Activated T-helper 1 cell treated with anti-CD3 and anti-CD28 coated beads, Interleukin-12 subunit alpha, Interleukin-12 subunit beta, Interleukin-2, Interleukin-4 antibody, amounts not matched to agents 30 ng/mL and 10 ng/mL and 1 ng/mL, durations not matched to agents 14 hours and 24 hours and 36 hours (primary cell): ENCODE measurements at regions of chr11 and their contacts with region 1.

Region 1: DNA sequence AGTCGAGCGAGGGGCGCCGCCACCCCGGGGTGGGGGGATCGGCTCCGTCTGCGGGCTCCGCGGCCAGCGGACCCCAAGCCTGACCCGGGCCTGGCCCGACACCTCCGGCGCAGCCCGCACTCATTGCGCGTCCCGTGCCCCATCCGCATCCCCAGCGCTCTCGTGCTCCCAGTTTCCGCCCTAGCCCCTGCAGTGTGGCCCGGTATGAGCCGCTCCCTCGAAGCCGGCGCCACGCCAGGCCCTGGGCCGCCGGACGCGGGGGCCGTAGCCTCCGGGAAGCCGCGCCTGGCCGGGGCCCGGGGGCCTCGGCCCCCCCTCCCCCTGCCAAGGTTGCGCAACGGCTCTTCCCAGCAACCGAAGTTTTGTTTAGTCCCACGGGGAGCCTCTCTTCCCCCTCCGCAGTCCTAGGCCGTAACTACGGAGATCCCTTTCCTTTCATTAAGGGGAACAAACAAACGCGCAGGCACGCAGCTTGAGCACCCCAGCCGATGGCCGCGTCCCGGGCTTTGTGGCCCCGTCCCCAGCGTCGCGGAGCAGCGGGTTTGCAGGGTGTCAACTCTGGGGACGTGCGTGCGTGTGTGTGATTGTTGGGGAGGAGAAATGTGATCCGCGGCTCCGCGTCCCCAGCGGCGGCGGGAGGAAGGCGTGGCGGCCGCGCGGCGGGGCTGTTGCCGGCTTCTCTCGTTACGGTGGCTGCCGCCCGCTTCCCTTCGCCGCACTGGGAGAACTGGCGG is 883 bp downstream of the HIPK3 start:
- DNase-seq: peak; percentile 72
- H3K4me3 Mint-ChIP-seq: peak overlapping the region; percentile 99
- H3K27ac Mint-ChIP-seq: peak overlapping the region; percentile 99
- H3K4me1 Mint-ChIP-seq: peaks cover 46% of the 10 kb centered on the region
- H3K27me3 Mint-ChIP-seq: peaks cover 2% of the 10 kb centered on the region

Region 2: DNA sequence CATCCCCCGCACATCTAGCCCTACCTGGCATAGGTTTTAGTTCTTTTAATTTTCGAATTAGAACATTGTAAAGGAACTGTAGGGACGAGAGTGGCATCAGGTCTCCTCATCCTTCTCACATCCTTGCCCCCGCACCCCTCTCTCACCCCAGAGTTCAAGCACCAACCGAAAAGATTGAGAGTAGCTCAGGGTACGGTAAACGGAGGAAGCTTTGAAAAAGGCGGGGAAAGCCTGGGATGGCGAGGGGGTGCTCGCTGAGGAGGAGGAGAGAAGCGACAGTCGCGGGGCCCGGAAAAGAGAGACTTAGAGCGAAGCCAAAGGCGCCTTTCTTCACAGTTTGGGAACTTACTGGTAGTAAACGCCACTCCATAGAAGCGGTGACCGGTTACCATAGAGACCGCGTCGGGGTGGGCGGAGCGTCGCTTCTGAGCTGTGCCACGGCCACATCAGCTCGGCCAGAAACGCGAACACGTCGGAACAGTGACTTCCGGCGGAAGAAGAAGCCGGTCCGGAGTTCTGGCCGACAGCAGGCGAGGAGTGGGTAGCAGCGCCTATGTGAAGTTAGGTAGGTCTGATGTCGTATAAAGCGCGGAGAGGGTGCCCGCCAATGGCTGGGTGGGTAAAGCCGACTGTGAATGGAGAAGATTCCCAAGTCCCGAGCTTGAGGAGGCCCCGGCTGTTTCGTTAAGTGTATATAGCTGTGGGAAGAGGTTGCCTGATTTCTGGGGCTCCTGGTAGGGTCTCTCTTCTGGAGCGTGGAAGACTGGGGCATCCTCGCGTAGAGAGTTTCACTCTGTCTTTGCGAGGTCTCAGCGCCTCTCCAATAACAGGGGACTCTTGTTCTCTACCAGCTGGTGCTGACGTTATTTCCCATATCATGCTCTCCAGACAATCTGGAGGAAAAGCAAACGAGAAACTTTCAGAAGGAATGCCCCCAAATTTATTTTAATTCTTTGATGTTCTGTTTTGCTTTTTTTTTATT is 1888.4 kb before region 1 on chr11 and contains the starts of genes DCDC1 and DNAJC24:
- intact Hi-C with region 1: loop called (anchors 5 kb)
- DNase-seq: peak; percentile 89
- H3K4me3 Mint-ChIP-seq: peak within 1 kb of the TSS; percentile 99
- H3K27ac Mint-ChIP-seq: peak within 1 kb of the TSS; percentile 95
- H3K4me1 Mint-ChIP-seq: peaks cover 25% of the 10 kb centered on the region
- H3K27me3 Mint-ChIP-seq: peaks cover 7% of the 10 kb centered on the region
- total RNA-seq, gene DCDC1: not detected in 2 replicates
- total RNA-seq, gene DNAJC24: 15.8 and 20.6 TPM in 2 replicates

Region 3: GRCh38 chr11:33161120-33162005 is 96.7 kb before region 1 on chr11 and contains the start of gene CSTF3:
- intact Hi-C with region 1: loop called (anchors 1 kb)
- DNase-seq: peak; percentile 91
- H3K4me3 Mint-ChIP-seq: peak within 1 kb of the TSS; percentile 100
- H3K27ac Mint-ChIP-seq: peak within 1 kb of the TSS; percentile 100
- H3K4me1 Mint-ChIP-seq: peaks cover 40% of the 10 kb centered on the region
- H3K27me3 Mint-ChIP-seq: no peaks in the 10 kb centered on the region
- total RNA-seq, gene CSTF3: 34.9 and 36.5 TPM in 2 replicates

Region 4: DNA sequence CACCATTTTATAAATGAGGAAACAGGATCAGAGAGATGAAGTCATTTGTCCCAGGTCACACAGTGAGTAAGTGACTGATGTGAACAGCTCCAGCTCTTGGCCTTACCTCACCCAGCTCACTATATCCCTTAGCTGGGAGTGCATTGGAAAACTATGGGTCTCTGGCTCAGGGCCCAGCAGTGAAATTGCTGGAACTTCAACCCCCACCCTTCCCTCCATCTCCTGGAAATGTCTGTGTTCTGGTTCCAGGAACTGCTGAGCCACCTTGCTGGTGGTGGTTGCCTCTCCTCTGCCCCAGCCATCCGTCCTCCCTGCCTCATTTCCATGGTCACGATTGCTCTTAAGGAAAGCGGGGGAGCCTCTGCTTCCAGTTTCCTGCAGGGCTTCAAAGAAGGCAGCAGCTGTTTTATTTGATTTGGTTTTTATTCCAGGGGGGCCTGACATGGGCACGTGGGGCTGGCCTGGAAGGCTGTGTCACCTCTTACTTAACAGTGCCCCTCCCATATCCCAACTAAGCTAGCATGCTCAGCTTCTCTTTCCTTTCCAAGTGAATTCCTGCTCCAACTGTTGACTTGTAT is 50.6 kb before region 1 on chr11:
- intact Hi-C with region 1: no loop called
- DNase-seq: no peak
- H3K4me3 Mint-ChIP-seq: no peak overlapping the region
- H3K27ac Mint-ChIP-seq: no peak overlapping the region
- H3K4me1 Mint-ChIP-seq: no peaks in the 10 kb centered on the region
- H3K27me3 Mint-ChIP-seq: no peaks in the 10 kb centered on the region

Region 5: GRCh38 chr11:33700425-33701271 is 442.6 kb after region 1 on chr11 and contains the start of gene C11orf91:
- intact Hi-C with region 1: loop called (anchors 1 kb)
- DNase-seq: peak; percentile 94
- H3K4me3 Mint-ChIP-seq: peak within 1 kb of the TSS; percentile 84
- H3K27ac Mint-ChIP-seq: peak within 1 kb of the TSS; percentile 78
- H3K4me1 Mint-ChIP-seq: peaks cover 29% of the 10 kb centered on the region
- H3K27me3 Mint-ChIP-seq: peaks cover 22% of the 10 kb centered on the region
- total RNA-seq, gene C11orf91: 0.23 TPM in 1 of 2 replicates, not detected in the other

Region 6: GRCh38 chr11:34105079-34105956 is 847.3 kb after region 1 on chr11 and contains the start of gene NAT10:
- intact Hi-C with region 1: loop called (anchors 5 kb)
- DNase-seq: peak; percentile 97
- H3K4me3 Mint-ChIP-seq: peak within 1 kb of the TSS; percentile 95
- H3K27ac Mint-ChIP-seq: peak within 1 kb of the TSS; percentile 90
- H3K4me1 Mint-ChIP-seq: peaks cover 48% of the 10 kb centered on the region
- H3K27me3 Mint-ChIP-seq: no peaks in the 10 kb centered on the region
- total RNA-seq, gene NAT10: 157 and 158 TPM in 2 replicates